ENCODE measurements at regions of chr17 and their contacts with region 1.

Region 1: DNA sequence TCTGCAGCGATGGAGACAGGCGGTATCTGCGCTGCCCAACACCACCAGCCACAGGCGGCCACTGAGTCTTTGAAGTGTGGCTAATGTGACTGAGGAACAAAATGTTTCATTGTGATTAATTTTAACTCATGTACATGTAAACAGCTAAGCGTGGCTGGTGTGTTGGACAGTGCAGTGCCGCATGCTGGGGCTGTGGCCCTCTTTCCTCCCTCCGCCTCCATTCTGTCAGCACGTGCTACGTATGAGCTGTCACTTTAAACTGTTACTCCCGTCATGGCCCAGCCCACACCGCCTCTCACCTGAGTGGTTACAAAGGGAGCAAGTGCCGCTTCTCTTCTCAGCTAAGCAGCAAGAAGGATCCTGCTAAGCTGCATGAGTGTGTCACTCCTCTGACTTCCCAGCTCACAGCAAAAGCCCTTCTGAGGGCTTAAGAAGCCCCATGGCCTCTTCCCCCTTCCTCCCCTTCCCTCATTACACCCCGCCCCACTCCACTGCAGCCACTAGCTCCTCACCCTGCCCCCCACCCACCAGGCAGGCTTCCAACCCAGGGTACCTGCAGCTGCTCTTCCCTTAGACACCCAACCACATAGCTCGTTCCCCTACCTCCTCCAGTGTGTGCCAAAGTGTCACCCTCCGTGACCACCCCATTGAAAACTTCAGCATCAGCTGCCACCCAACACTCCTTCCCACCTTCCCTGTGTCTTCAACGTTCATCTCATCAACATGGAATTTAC is 15.0 kb downstream of the HASPIN start:
- H3K4me3 ChIP-seq: no peak overlapping the region
- H3K27ac ChIP-seq: no peak overlapping the region
- H3K4me1 ChIP-seq: no peaks in the 10 kb centered on the region
- CTCF ChIP-seq: no peak

Region 2: GRCh38 chr17:3647769-3648555 is 90.8 kb before region 1 on chr17:
- CTCF ChIA-PET with region 1: no interaction called
- POLR2A ChIA-PET with region 1: no interaction called
- H3K4me3 ChIP-seq: no peak overlapping the region
- H3K27ac ChIP-seq: no peak overlapping the region
- H3K4me1 ChIP-seq: no peaks in the 10 kb centered on the region
- CTCF ChIP-seq: peak; percentile 78

Region 3: DNA sequence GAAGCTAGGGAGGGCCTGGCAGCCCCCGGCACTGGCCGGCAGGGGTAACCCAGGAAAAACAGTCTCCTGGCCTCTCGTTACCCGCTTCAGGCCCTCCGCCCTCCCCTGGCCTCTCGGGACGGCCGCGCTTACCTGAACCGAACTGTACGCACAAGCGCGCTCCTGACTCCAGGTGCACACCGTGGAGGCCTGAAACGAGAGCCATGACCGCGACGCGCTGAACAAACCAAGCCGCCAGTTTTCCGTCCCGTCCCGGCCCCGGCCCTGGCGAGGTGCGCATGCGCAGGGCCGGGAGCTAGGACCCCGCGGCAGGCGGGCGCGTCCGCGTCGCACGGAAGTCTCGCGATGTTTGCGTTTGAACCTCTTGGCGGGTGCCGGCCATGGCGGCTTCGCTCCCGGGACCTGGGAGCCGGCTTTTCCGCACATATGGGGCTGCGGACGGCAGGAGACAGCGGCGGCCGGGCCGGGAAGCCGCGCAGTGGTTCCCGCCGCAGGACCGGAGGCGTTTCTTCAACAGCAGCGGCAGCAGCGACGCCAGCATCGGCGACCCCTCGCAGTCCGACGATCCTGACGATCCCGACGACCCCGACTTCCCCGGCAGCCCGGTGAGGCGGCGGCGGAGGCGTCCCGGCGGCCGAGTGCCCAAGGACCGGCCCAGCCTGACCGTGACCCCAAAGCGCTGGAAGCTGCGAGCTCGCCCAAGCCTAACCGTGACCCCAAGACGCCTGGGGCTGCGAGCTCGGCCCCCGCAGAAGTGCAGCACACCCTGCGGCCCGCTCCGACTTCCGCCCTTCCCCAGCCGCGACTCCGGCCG is 15.0 kb before region 1 on chr17 and contains the start of gene HASPIN:
- CTCF ChIA-PET with region 1: interaction called, 84 read pairs
- POLR2A ChIA-PET with region 1: interaction called, 10 read pairs
- H3K4me3 ChIP-seq: peak within 1 kb of the TSS; percentile 94
- H3K27ac ChIP-seq: peak within 1 kb of the TSS; percentile 78
- H3K4me1 ChIP-seq: peaks cover 6% of the 10 kb centered on the region
- CTCF ChIP-seq: peak; percentile 81

Region 4: DNA sequence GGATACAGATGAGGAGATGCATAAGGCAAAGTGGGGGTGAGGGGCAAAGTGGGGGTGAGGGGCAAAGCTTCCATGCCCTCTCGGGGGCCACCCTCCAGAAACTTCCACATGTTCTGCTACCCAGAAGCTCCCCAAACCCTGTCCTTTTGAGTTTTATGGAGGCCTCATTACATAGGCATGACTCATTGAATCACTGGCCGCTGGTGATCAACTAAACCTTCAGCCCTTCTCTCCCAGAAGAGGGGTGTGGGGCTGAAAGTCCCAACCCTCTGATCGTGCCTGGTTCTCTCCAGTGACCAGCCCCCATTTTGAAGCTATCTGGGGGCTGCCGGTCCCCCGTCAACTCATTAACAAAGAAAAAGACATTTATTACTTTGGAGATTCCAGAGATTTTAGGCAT is 34.8 kb after region 1 on chr17:
- CTCF ChIA-PET with region 1: interaction called, 15 read pairs
- POLR2A ChIA-PET with region 1: no interaction called
- H3K4me3 ChIP-seq: no peak overlapping the region
- H3K27ac ChIP-seq: no peak overlapping the region
- H3K4me1 ChIP-seq: no peaks in the 10 kb centered on the region
- CTCF ChIP-seq: no peak

Region 5: GRCh38 chr17:3818786-3819185 is 80.1 kb after region 1 on chr17:
- CTCF ChIA-PET with region 1: interaction called, 23 read pairs
- POLR2A ChIA-PET with region 1: no interaction called
- H3K4me3 ChIP-seq: no peak overlapping the region
- H3K27ac ChIP-seq: no peak overlapping the region
- H3K4me1 ChIP-seq: no peaks in the 10 kb centered on the region
- CTCF ChIP-seq: no peak

Region 6: GRCh38 chr17:3845621-3846441 is 107.1 kb after region 1 on chr17 and contains the start of gene NCBP3:
- CTCF ChIA-PET with region 1: interaction called, 120 read pairs
- POLR2A ChIA-PET with region 1: interaction called, 11 read pairs
- H3K4me3 ChIP-seq: peak within 1 kb of the TSS; percentile 96
- H3K27ac ChIP-seq: peak within 1 kb of the TSS; percentile 84
- H3K4me1 ChIP-seq: peaks cover 6% of the 10 kb centered on the region
- CTCF ChIP-seq: peak; percentile 97

Region 7: DNA sequence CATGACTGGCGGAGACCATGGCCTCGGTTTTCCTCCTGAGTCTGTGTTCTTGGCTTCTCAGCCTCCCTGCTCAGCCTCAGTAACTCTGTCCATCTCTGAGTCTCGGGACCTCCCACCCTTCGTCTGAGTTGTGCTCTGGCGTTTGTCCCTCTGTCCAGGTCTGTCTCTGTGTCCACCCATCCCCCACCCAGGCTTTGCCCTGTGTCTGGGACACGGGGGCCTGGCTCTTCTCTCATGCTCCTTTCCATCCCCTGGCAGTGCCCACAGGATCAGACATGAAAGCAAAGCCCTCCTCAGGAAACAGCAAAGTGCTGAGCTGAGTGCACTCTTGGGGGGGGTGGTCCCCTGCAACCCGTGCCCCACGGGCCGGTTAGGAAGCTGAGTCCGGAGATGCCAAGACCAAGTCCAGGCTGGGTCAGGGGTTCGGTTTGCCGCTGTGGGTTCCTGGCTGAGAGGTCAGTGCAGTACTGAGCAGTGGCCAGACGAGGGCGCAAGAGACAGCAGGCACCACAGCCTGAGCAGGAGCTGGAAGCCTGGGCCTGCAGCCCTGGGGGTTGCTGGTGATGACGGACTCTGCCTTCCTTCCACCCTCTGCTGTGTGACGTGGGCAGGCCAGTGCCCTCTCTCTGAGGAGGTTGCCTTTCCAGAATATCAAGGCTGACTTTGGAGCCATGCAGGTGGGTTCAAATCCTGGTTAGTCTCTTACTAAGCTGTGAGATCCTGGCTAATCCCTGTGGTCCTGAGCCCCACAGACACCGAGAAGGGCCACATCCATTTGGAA is 175.0 kb after region 1 on chr17:
- CTCF ChIA-PET with region 1: interaction called, 13 read pairs
- POLR2A ChIA-PET with region 1: no interaction called
- H3K4me3 ChIP-seq: no peak overlapping the region
- H3K27ac ChIP-seq: no peak overlapping the region
- H3K4me1 ChIP-seq: peaks cover 2% of the 10 kb centered on the region; the same call in 1 of the 2 replicates
- CTCF ChIP-seq: peak; percentile 90